Tibial artery (tissue), 4 donors: ENCODE measurements at regions of chr10 and their contacts with region 1.

Region 1: DNA sequence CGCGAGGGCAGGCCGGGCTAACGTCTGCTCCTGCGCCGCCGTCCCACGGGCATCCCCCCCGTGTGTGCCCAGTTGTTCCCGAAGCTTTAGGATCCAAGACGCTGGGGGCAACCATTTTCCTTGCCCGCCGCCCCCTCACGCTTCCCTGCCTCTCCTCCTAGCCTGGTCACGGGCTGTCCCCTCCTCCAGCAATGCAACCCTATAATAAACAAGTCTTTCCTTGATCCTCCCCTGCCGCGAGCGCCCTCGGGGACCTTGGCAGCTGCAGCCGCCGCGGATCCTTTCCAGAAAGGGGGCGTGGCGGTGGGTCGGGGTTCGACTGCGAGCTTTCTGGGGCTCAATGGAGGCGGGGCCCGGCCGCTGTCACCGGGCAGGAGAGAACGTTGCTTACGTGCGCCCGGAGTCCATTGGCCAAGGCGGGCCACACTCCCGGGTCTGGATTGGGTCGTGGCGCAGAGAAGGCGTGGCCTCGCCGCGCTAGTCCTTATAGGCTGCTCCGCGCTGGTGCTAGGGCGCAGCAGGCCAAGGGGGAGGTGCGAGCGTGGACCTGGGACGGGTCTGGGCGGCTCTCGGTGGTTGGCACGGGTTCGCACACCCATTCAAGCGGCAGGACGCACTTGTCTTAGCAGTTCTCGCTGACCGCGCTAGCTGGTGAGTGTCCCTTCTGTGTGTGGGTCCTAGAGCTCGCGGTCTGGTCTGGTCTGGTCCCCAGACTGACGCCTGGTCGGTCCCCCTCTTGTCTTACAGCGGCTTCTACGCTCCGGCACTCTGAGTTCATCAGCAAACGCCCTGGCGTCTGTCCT is at the start of gene DDIT4:
- DNase-seq: peak; percentile 100
- H3K4me3 ChIP-seq: peak within 1 kb of the TSS; percentile 98 to 99
- H3K27ac ChIP-seq: peak within 1 kb of the TSS; percentile 99
- H3K4me1 ChIP-seq: peaks cover 0 to 30% (median 18%) of the 10 kb centered on the region in 4 donors
- H3K27me3 ChIP-seq: no peaks in the 10 kb centered on the region
- CTCF ChIP-seq: no peak

Region 2: DNA sequence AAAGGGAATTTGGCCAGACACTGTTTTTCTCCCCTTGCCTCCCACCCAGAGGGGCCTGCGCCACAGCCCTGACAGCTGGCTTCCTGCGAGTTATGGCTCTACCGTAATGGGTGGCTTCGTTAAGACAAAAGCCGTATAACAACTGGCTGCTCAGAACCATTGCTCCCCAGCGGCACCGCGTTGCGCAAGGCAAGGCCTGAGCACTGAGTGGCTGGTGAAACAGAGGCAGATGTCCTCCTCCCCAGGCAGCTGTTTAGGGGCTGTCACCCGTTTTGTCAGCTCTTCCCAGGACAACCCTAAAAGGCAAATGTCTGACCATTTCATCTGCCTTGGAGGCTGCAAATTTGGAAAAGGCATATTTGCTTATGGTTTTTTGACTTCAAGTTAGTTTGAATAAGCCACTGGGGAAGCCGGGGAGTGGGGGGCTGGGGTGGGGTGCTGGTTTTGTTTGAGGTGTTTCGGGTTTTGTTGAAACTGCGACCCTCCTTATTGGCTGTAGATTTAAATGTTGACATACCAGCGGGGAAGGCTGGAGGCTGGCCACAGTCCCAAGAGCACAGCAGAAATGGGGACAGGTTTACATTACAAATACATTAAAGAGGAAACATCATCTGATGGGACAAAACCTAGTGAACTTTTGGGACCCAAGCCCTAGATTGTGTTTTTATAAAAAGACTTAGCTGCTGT is 184.6 kb before region 1 on chr10:
- intact Hi-C with region 1: no loop called
- DNase-seq: no peak
- H3K4me3 ChIP-seq: no peak overlapping the region
- H3K27ac ChIP-seq: no peak overlapping the region
- H3K4me1 ChIP-seq: peaks cover 0 to 24% (median 17%) of the 10 kb centered on the region in 4 donors
- H3K27me3 ChIP-seq: peaks cover 3 to 36% of the 10 kb centered on the region in 2 donors
- CTCF ChIP-seq: no peak

Region 3: DNA sequence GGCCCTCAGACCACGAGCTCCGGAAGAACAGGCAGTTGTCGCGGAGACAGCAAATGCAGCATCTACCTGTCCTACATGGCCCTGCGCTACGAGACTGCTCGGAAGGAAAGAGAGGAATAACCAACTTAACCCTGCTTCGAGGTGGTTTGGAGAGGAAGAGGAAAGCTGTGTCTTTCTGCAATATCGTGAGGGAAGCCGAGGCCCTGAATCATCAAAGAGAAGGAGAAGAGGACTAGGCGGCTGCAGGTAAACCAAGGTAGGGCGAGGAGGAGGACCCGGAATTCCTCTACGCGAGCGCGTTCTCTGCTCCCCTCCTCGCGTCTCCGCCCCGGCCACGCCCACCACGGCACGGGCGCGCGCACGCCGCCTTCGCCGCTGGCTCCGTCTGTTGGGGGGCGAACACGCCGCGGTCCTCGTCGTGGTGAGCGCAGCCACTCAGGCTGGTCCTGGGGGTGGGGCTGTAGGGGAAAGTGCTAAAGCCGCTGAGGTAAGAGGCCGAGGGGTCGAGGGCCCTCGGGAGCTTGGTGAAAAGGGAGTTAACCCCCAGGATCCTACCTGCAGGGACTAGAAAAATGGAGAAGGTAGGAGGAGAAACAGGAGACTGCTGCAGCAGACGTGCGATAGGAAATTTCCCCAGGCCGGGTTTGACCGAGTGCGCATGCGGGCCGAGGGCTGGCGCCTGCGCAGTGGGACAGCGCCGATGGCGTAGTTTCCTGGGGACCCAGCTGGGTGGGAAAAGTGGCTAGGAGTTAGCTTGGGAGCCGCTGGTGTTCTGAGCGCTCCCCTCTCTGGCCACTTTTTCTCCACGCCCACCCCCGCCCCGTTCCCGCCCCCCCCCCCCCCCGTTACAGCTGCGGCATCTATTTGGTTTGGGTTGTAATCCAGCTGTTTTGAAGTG is 57.7 kb before region 1 on chr10 and contains the starts of genes ANAPC16 and ASCC1:
- intact Hi-C with region 1: loop called (anchors 5 kb)
- DNase-seq: peak; percentile 87 to 96
- H3K4me3 ChIP-seq: peak within 1 kb of the TSS; percentile 68 to 78
- H3K27ac ChIP-seq: peak within 1 kb of the TSS; percentile 92 to 94
- H3K4me1 ChIP-seq: peaks cover 0 to 60% (median 22%) of the 10 kb centered on the region in 4 donors
- H3K27me3 ChIP-seq: no peaks in the 10 kb centered on the region
- CTCF ChIP-seq: no peak

Region 4: DNA sequence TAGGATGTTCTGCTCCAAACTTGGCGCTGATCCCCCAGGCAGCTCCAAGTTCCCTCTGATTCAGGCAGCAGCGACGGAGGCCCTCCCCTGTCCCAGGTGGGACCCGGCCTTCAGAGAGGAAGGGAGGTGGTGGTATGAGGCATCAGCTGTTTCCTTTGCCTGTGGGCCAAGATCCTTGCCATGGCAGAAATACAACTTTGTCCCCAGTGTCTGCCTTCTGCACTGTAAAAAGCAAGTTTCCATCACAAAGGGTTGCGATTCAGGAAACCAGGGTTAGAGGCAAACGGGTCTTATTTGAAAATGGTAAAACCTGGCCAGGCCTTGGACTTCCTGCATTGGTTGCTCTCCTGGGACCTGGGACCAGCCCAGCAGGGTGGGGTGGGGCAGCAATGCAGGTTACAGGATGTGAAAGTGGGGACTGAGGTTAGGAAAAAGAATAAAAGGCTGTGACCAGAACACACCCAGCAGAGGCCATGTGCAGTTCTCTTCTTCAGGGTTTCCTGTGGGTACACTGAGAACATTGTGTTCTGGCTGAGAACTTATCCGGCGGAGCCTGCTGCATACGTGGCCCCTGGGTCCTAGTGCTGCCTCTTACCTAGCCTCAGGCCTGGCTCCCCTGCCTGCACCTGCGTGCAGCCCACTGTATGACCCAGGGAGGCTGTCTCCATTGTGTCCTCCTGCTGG is 25.0 kb before region 1 on chr10:
- intact Hi-C with region 1: loop called (anchors 2 kb)
- DNase-seq: peak; percentile 93 to 97
- H3K4me3 ChIP-seq: peak overlapping the region; percentile 28 to 37
- H3K27ac ChIP-seq: peak overlapping the region; percentile 85 to 91
- H3K4me1 ChIP-seq: peaks cover 11 to 99% (median 85%) of the 10 kb centered on the region in 4 donors
- H3K27me3 ChIP-seq: no peaks in the 10 kb centered on the region
- CTCF ChIP-seq: no peak

Region 5: DNA sequence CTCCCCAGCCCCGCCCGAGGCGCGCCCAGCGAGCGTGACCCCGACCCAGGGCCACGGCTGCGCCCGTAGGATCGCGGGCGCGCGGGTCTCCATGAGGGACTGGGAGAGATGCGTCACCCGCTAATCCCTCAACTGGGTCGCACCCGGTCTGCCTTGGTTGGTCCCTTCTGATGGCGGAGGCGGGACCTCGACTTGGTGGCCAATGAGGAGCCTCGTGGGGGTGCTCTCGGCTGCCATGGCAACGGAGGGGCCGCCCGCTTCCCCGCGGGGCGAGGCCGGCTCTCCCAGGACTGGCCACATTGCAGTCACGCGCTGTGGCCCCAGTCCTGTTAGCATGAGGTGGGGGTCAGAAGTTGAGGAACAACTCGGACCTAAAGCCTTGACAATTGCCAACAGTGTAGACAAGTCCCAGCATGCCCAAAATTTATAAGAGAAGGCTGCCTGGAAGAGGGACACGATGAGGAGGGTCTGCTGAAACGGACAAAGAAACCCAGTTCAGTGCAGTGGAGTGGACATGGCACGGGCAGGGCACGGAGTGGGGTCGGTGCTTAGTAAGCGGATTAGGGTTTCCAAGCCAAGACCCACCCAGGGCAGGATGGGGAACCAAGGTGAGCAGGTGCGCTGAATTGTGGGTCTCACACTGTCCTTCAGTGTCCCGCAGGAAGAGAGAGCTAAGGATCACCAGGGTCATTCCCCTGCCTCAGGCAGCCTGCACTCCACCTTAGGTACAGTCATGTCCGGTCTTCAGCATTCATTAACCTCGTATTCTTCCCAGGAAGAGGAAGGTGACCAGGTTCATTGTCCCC is 24.6 kb after region 1 on chr10:
- intact Hi-C with region 1: loop called (anchors 1 kb)
- DNase-seq: peak; percentile 99
- H3K4me3 ChIP-seq: peak overlapping the region; percentile 69 to 74
- H3K27ac ChIP-seq: peak overlapping the region; percentile 87 to 90
- H3K4me1 ChIP-seq: peaks cover 0 to 16% (median 6%) of the 10 kb centered on the region in 4 donors
- H3K27me3 ChIP-seq: no peaks in the 10 kb centered on the region
- CTCF ChIP-seq: no peak

Region 6: GRCh38 chr10:72319416-72320254 is 46.0 kb after region 1 on chr10:
- intact Hi-C with region 1: loop called (anchors 5 kb)
- DNase-seq: peak; percentile 93 to 97
- H3K4me3 ChIP-seq: peak overlapping the region; percentile 46 to 47
- H3K27ac ChIP-seq: peak overlapping the region; percentile 84 to 85
- H3K4me1 ChIP-seq: peaks cover 0 to 70% (median 53%) of the 10 kb centered on the region in 4 donors
- H3K27me3 ChIP-seq: no peaks in the 10 kb centered on the region
- CTCF ChIP-seq: peak in 1 of 2 experiments; percentile 10

Region 7: DNA sequence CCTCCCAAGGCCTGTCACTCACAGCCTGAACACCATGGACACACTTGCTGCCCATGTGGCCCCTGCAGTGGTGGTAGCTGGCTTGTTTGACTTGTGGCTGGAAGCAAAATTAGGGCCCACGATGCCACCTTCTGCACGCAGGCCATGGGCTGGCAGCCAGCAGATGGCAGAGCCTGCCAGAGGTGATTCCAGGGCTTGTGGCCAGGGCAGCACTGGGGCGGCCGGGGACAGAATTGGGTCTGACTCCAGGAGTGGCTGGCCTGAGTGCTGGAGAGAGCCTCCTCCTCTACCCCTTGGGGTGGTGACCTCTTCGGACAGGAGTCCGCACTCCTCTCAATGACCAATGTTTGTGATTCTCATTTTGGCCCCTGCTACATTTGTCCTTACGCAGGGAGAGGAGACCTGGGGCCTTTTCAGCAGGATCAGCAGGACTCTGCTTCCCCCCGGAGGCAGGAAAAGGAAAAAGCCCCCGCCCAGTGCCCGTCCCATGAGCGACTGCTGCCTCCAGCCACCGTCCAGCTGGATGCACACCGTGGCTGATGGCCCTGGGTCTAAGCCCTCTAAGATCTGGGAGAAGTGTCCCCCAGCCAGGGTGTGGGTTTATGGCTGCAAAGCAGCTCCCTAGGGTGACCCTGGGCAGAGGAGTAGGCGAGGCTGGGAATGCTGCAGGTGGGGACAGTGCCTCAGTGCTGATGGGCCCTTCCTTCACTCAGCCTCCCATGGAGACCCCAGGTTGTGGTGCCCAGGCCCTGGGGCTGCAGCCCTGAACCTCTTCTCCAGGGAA is 54.6 kb after region 1 on chr10:
- intact Hi-C with region 1: loop called (anchors 5 kb)
- DNase-seq: peak; percentile 72 to 91
- H3K4me3 ChIP-seq: no peak overlapping the region
- H3K27ac ChIP-seq: peak overlapping the region; percentile 45 to 64
- H3K4me1 ChIP-seq: peaks cover 0 to 73% (median 66%) of the 10 kb centered on the region in 4 donors
- H3K27me3 ChIP-seq: no peaks in the 10 kb centered on the region
- CTCF ChIP-seq: peak; percentile 59 to 69